Activated CD4-positive, alpha-beta T cell treated with anti-CD3 and anti-CD28 coated beads for 36 hours (primary cell): ENCODE measurements at regions of chr5 and their contacts with region 1.

Region 1: DNA sequence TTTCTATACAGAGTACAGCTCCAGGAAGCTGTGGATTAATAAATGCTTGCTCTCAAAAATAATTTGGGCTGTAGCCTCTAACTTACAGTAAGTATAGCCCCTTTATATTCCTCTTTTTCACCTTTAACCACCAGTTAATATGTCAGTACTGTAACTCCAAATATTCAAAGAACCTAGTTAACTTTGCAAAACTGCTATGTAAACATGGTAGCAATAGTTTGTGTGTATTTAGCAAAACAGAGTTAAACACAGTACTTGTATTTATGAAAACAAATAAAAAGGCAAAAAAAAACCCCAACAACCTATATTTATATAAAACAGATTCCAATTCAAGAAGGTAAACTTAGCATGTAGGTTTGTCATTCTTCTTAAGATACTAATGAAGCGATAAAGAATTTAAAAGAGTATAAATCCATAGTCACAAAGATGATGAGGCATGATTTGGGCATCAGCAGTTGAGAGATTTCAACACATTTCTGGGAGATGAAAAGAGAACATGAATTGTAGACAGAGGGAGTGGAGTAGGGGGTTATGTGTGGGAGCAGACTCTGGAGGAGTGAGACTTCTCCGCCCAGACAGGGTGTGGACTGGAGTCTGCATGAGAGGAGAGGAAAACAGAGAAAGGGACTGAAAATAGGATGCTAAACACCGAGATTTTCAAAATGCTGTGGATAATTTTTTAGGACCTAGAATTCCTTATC is 47.0 kb upstream of the F2RL1 start:
- DNase-seq: no peak
- ATAC-seq: no peak
- H3K4me3 Mint-ChIP-seq: no peak overlapping the region
- H3K27ac Mint-ChIP-seq: no peak overlapping the region
- H3K4me1 Mint-ChIP-seq: peaks cover 2% of the 10 kb centered on the region
- H3K27me3 Mint-ChIP-seq: no peaks in the 10 kb centered on the region

Region 2: DNA sequence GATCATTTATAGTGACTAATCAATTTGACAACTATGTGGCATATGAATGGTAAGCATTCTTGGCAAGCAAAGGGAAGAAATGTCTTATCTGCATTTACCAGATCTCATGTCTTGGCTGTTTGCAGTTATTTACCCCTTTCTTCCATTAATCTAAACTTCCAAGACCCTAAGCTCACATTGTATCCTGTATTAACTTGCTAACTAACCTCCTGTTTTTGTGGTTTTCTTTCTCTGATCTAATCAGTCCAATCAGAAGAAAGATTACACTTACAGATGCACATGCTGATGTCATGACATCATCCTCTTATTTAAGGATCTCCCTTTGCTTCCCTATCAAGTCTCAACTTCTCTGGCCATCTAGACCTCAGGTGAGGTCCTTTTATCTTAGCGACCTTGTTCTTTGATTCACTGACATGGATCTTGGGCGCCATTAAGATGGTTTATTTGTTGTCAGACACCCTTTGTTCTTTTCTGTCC is 244.1 kb before region 1 on chr5:
- CTCF ChIA-PET with region 1: no interaction called
- POLR2A ChIA-PET with region 1: no interaction called
- intact Hi-C with region 1: no loop called
- DNase-seq: no peak
- ATAC-seq: no peak
- H3K4me3 Mint-ChIP-seq: no peak overlapping the region
- H3K27ac Mint-ChIP-seq: no peak overlapping the region
- H3K4me1 Mint-ChIP-seq: peaks cover 77% of the 10 kb centered on the region
- H3K27me3 Mint-ChIP-seq: no peaks in the 10 kb centered on the region

Region 3: GRCh38 chr5:76608833-76609232 is 163.0 kb before region 1 on chr5:
- CTCF ChIA-PET with region 1: interaction called, 16 read pairs
- POLR2A ChIA-PET with region 1: no interaction called
- intact Hi-C with region 1: no loop called
- DNase-seq: peak; percentile 15
- ATAC-seq: peak; percentile 56
- H3K4me3 Mint-ChIP-seq: no peak overlapping the region
- H3K27ac Mint-ChIP-seq: peak overlapping the region; percentile 58
- H3K4me1 Mint-ChIP-seq: peaks cover 23% of the 10 kb centered on the region
- H3K27me3 Mint-ChIP-seq: no peaks in the 10 kb centered on the region

Region 4: GRCh38 chr5:76705574-76705973 is 66.3 kb before region 1 on chr5:
- CTCF ChIA-PET with region 1: interaction called, 39 read pairs
- POLR2A ChIA-PET with region 1: no interaction called
- intact Hi-C with region 1: no loop called
- DNase-seq: no peak
- ATAC-seq: no peak
- H3K4me3 Mint-ChIP-seq: no peak overlapping the region
- H3K27ac Mint-ChIP-seq: no peak overlapping the region
- H3K4me1 Mint-ChIP-seq: peaks cover 2% of the 10 kb centered on the region
- H3K27me3 Mint-ChIP-seq: no peaks in the 10 kb centered on the region

Region 5: GRCh38 chr5:76720988-76721569 is 50.8 kb before region 1 on chr5:
- CTCF ChIA-PET with region 1: interaction called, 45 read pairs
- POLR2A ChIA-PET with region 1: no interaction called
- intact Hi-C with region 1: loop called (anchors 1 to 5 kb)
- DNase-seq: no peak
- ATAC-seq: no peak
- H3K4me3 Mint-ChIP-seq: no peak overlapping the region
- H3K27ac Mint-ChIP-seq: no peak overlapping the region
- H3K4me1 Mint-ChIP-seq: peaks cover 5% of the 10 kb centered on the region
- H3K27me3 Mint-ChIP-seq: peaks cover 19% of the 10 kb centered on the region

Region 6: DNA sequence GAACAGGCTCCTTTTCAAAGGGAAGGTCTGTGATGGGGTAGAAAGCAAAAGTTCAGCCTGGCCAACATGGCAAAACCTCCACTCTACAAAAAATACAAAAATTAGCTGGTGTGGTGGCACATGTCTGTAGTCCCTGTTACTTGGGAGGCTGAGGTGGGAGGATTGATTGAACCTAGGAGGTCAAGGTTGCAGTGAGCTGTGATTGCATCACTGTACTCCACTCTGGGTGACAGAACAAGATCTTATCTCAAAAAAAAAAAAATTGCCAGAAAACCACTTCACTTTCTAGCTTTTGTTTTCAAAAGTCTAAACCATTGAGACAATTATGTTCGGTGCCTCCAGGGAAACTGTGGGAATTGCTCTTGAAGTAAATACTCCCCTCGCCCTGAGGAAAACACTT is 121.4 kb after region 1 on chr5:
- CTCF ChIA-PET with region 1: no interaction called
- POLR2A ChIA-PET with region 1: no interaction called
- intact Hi-C with region 1: no loop called
- DNase-seq: no peak
- ATAC-seq: no peak
- H3K4me3 Mint-ChIP-seq: no peak overlapping the region
- H3K27ac Mint-ChIP-seq: no peak overlapping the region
- H3K4me1 Mint-ChIP-seq: no peaks in the 10 kb centered on the region
- H3K27me3 Mint-ChIP-seq: no peaks in the 10 kb centered on the region

Region 7: DNA sequence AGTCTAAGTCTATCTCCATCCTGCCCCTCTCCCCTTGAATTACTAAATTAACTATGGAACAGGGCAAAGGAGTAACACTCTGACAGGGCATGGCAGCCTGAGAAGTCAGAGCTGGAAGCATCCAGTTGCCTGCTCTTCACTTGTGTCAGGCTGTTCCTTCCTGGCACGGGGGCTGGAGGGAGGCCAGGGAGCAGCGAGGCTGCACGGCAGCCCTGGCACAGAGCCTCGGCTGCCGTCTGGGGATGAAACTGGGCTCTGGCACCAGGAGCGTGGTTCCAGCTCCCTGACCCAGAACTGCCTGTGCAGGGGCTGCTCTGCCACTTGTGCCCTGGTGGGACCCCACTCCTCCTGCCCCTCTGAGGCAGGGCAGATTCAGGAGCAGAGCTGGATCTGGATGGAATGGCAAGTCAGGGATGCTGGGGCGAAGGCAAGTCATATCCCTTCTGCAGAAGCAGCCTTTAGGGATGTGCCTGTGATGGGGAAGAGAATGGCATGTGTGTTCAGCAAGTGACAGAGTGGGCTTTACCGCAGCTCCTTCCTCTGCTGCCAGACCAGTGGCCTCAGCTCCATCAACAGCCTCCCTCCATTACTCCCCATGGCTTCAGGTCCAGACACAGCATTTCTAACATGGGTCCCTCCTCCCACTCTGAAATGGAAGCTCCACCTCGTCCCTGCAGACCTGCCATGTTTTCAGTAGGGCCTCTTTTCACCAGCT is 396.5 kb after region 1 on chr5:
- CTCF ChIA-PET with region 1: no interaction called
- POLR2A ChIA-PET with region 1: no interaction called
- intact Hi-C with region 1: no loop called
- DNase-seq: no peak
- ATAC-seq: no peak
- H3K4me3 Mint-ChIP-seq: no peak overlapping the region
- H3K27ac Mint-ChIP-seq: no peak overlapping the region
- H3K4me1 Mint-ChIP-seq: no peaks in the 10 kb centered on the region
- H3K27me3 Mint-ChIP-seq: no peaks in the 10 kb centered on the region

Region 8: DNA sequence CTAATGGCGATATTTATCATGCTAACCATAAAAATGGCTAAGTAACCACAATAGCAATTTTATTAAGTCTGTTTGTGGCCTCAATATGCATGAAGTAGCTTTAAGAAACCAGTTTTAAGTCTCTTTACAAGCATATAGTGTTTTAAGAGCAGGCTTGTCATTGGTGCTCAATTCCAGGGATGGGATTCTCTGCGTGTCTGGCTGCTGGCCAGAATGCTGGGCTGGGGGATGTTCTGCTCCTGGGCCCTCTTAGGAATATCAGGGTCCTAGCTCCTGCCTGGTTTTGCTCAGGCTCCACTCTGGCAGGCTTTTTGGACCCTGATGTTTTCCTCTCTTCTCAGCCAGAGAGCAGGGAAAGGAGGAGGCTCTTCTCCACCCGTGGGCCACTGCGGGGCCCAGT is 565.8 kb after region 1 on chr5:
- CTCF ChIA-PET with region 1: no interaction called
- POLR2A ChIA-PET with region 1: no interaction called
- intact Hi-C with region 1: no loop called
- DNase-seq: no peak
- ATAC-seq: no peak
- H3K4me3 Mint-ChIP-seq: no peak overlapping the region
- H3K27ac Mint-ChIP-seq: no peak overlapping the region
- H3K4me1 Mint-ChIP-seq: no peaks in the 10 kb centered on the region
- H3K27me3 Mint-ChIP-seq: peaks cover 1% of the 10 kb centered on the region